Naive thymus-derived CD4-positive, alpha-beta T cell (primary cell): ENCODE measurements at regions of chr11 and their contacts with region 1.

Region 1: DNA sequence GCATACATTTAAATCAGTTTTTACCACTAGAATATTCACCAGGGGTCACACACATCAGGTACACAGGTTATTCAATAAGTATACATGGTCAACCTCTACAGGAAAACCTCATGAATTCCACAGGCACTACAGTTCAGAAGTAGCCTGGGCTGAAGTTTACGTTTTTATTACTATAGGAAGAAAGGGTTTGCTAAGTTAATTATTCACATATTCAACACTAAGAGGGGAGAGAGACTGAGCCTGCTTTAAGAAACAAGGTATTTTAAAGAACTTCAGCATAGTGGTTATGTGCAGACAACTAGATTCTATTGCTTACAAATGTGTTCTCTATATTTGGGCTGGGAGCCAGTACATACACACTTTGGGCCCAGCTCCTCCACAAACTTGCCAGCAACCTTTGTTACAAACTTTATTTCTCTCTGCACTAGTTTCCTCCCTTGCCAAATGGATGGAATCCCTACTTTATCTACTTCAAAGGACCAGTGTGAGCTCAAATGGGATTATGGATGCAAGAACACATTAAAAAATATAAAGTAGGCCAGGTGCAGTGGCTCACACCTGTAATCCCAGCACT is 31.9 kb downstream of the IL18BP start:
- DNase-seq: no peak
- ATAC-seq: no peak
- H3K4me3 ChIP-seq: no peak overlapping the region
- H3K4me3 Mint-ChIP-seq: peak overlapping the region in 8 of 10 donors; percentile 18 to 57 (median 34)
- H3K27ac ChIP-seq: peak overlapping the region; percentile 65
- H3K27ac Mint-ChIP-seq: peak overlapping the region in 8 of 9 donors; percentile 45 to 92 (median 70)
- H3K4me1 ChIP-seq: peaks cover 9 to 28% of the 10 kb centered on the region in 2 donors
- H3K4me1 Mint-ChIP-seq: peaks cover 25 to 80% (median 72%) of the 10 kb centered on the region in 7 donors
- H3K27me3 ChIP-seq: no peaks in the 10 kb centered on the region
- H3K27me3 Mint-ChIP-seq: no peaks in the 10 kb centered on the region

Region 2: GRCh38 chr11:70772950-70773349 is 1257.6 kb before region 1 on chr11:
- CTCF ChIA-PET with region 1: no interaction called
- POLR2A ChIA-PET with region 1: no interaction called
- intact Hi-C with region 1: no loop called
- DNase-seq: no peak
- ATAC-seq: no peak
- H3K4me3 ChIP-seq: no peak overlapping the region
- H3K4me3 Mint-ChIP-seq: no peak overlapping the region
- H3K27ac ChIP-seq: no peak overlapping the region
- H3K27ac Mint-ChIP-seq: no peak overlapping the region
- H3K4me1 ChIP-seq: no peaks in the 10 kb centered on the region
- H3K4me1 Mint-ChIP-seq: no peaks in the 10 kb centered on the region
- H3K27me3 ChIP-seq: no peaks in the 10 kb centered on the region
- H3K27me3 Mint-ChIP-seq: no peaks in the 10 kb centered on the region

Region 3: DNA sequence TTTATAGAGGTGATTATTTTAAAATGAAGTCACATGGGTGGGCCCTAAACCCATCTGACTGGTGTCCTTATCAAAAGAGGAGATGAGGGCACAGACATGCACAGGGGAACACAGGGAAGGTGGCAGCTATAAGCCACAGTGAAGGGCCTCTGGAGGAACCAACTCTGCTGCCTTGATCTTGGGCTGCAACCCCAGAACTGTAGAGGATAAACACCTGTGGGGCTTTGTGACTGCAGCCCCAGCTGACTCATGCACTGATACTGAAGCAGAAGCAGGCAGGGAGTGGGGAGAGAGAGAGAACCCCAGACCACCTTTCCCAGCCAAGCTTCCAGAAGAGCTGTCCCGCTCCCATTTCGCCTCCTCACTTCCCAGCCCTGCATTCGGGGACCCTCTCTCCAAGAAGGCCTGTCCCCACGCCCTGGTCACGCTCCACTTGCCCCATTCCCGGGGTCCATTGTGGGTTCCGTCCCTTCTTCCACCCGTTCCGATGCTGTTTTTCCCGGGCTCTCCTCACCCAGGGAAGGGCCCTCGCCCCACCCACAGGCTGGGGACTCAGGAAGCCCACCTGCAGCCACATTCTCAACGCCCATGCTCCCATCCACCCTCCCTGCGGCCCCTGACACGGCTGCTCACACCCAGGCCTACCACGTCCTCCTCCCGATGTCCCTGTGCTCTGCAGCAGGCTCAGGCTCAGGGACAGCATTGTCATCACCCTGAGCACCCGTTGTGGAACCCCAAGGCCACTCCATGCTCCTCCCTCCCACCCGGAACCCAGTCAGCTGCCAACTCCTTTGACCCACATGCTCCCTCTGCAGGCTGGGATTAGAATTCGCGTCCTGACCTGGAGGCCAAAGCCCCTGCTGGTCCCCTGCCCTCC is 687.4 kb before region 1 on chr11:
- CTCF ChIA-PET with region 1: no interaction called
- POLR2A ChIA-PET with region 1: no interaction called
- intact Hi-C with region 1: no loop called
- DNase-seq: no peak
- ATAC-seq: no peak
- H3K4me3 ChIP-seq: no peak overlapping the region
- H3K4me3 Mint-ChIP-seq: no peak overlapping the region
- H3K27ac ChIP-seq: no peak overlapping the region
- H3K27ac Mint-ChIP-seq: no peak overlapping the region
- H3K4me1 ChIP-seq: no peaks in the 10 kb centered on the region
- H3K4me1 Mint-ChIP-seq: no peaks in the 10 kb centered on the region
- H3K27me3 ChIP-seq: no peaks in the 10 kb centered on the region
- H3K27me3 Mint-ChIP-seq: peaks cover 0 to 42% (median 17%) of the 10 kb centered on the region in 5 donors

Region 4: GRCh38 chr11:72085621-72086351 is 55.2 kb after region 1 on chr11:
- CTCF ChIA-PET with region 1: interaction called, 143 read pairs
- POLR2A ChIA-PET with region 1: interaction called, 13 read pairs
- intact Hi-C with region 1: loop called (anchors 2 kb)
- DNase-seq: no peak
- ATAC-seq: no peak
- H3K4me3 ChIP-seq: no peak overlapping the region
- H3K4me3 Mint-ChIP-seq: no peak overlapping the region
- H3K27ac ChIP-seq: no peak overlapping the region
- H3K27ac Mint-ChIP-seq: peak overlapping the region in 8 of 9 donors; percentile 58 to 83 (median 76)
- H3K4me1 ChIP-seq: peaks cover 0 to 9% of the 10 kb centered on the region in 2 donors
- H3K4me1 Mint-ChIP-seq: peaks cover 12 to 33% (median 24%) of the 10 kb centered on the region in 7 donors
- H3K27me3 ChIP-seq: no peaks in the 10 kb centered on the region
- H3K27me3 Mint-ChIP-seq: no peaks in the 10 kb centered on the region

Region 5: GRCh38 chr11:72102946-72103753 is 72.6 kb after region 1 on chr11 and contains the start of gene LAMTOR1:
- CTCF ChIA-PET with region 1: interaction called, 11 read pairs
- POLR2A ChIA-PET with region 1: interaction called, 6 read pairs
- intact Hi-C with region 1: no loop called
- DNase-seq: peak; percentile 87 to 98 (median 95)
- ATAC-seq: peak; percentile 98
- H3K4me3 ChIP-seq: peak within 1 kb of the TSS; percentile 54
- H3K4me3 Mint-ChIP-seq: peak within 1 kb of the TSS; percentile 66 to 97 (median 86)
- H3K27ac ChIP-seq: peak within 1 kb of the TSS; percentile 93
- H3K27ac Mint-ChIP-seq: peak within 1 kb of the TSS; percentile 83 to 98 (median 94)
- H3K4me1 ChIP-seq: peaks cover 20% of the 10 kb centered on the region in 2 donors
- H3K4me1 Mint-ChIP-seq: peaks cover 37 to 49% (median 44%) of the 10 kb centered on the region in 7 donors
- H3K27me3 ChIP-seq: no peaks in the 10 kb centered on the region
- H3K27me3 Mint-ChIP-seq: no peaks in the 10 kb centered on the region
- total RNA-seq, gene LAMTOR1: 41.8 to 83.0 (median 69.7) TPM

Region 6: GRCh38 chr11:72144807-72145560 is 114.4 kb after region 1 on chr11:
- CTCF ChIA-PET with region 1: interaction called, 53 read pairs
- POLR2A ChIA-PET with region 1: interaction called, 3 read pairs
- intact Hi-C with region 1: loop called (anchors 1 kb)
- DNase-seq: no peak
- ATAC-seq: no peak
- H3K4me3 ChIP-seq: no peak overlapping the region
- H3K4me3 Mint-ChIP-seq: no peak overlapping the region
- H3K27ac ChIP-seq: no peak overlapping the region
- H3K27ac Mint-ChIP-seq: no peak overlapping the region
- H3K4me1 ChIP-seq: no peaks in the 10 kb centered on the region
- H3K4me1 Mint-ChIP-seq: peaks cover 0 to 18% (median 3%) of the 10 kb centered on the region in 7 donors
- H3K27me3 ChIP-seq: no peaks in the 10 kb centered on the region
- H3K27me3 Mint-ChIP-seq: peaks cover 1 to 15% (median 4%) of the 10 kb centered on the region in 5 donors

Region 7: GRCh38 chr11:72238040-72238450 is 207.5 kb after region 1 on chr11:
- CTCF ChIA-PET with region 1: no interaction called
- POLR2A ChIA-PET with region 1: no interaction called
- intact Hi-C with region 1: loop called in 1 of 2 experiments (anchors 5 kb)
- DNase-seq: peak in 7 of 9 donors; percentile 25 to 47 (median 32)
- ATAC-seq: peak; percentile 69
- H3K4me3 ChIP-seq: no peak overlapping the region
- H3K4me3 Mint-ChIP-seq: peak overlapping the region in 1 of 10 donors; percentile 1
- H3K27ac ChIP-seq: no peak overlapping the region
- H3K27ac Mint-ChIP-seq: no peak overlapping the region
- H3K4me1 ChIP-seq: peaks cover 0 to 15% of the 10 kb centered on the region in 2 donors
- H3K4me1 Mint-ChIP-seq: peaks cover 11 to 33% (median 27%) of the 10 kb centered on the region in 7 donors
- H3K27me3 ChIP-seq: peaks cover 0 to 21% of the 10 kb centered on the region in 2 donors
- H3K27me3 Mint-ChIP-seq: peaks cover 26 to 39% (median 35%) of the 10 kb centered on the region in 5 donors